Cardiac septum (tissue), 1 donor: ENCODE measurements at regions of chr1 and their contacts with region 1.

Region 1: DNA sequence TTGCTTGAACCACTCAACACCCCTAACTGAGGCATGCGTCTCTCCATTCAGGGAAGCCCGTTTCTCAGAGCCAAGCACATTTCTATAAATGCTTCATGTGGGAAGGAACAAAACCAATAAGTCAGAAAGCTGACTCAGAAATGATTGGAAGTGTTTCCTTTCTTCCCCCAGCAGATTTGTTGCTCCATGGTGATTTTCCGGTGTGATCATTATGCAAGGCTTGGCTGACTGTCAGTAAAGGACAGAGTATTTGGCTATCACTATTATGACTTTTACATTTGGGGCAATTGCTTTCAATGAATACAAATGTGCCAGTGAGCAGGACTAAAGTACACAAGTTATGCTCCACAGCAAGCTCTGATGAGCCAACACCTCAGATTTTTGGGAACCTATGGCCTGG is 53.3 kb upstream of the ZC3H11B start:
- DNase-seq: no peak

Region 2: DNA sequence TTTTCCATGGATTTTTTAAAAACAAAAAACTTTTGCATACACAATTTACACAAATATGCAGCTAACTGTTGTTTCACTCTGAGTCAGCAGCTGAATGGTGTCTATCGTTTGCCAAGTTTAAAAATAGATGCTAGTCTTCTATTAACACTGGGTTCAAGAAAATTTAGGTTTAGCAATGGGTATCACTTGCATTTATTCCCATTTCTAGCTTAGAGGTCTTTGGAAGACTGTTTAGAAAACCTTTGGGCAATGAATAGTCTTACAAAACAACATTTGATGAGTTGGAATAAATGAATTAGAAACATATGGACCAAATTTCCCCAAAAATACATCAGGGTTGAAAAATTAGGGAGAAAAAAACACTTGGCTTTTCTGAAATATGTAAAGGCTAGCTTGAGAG is 326.8 kb before region 1 on chr1:
- intact Hi-C with region 1: no loop called
- DNase-seq: no peak

Region 3: DNA sequence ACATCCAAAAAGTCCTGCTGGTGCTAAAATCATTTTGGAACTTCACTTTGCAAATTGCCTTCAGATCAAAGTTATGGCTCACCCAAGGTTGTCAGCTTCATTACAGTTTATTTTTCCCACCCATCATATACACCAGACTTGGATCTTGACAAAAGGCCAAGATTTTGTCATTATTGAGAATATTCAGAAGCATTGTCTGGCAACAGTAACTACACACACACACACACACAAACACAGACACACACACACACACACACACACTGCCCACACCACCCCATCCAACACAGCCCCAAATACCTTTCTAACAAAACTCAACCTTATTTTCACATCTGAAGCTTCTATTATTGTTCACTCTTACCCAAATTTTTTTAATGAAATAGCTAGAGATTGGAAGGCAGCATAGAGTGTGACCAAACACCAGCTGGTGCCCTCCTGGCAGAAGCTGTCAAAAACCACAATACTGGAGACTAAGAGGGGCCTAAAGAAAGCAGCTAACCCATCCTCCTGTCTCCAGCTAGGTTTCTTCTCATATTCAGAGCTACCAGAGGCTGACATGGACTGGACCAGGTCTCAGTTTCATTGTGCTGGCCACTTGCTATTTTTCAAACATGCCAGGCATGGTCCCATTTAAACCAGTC is 85.7 kb after region 1 on chr1:
- intact Hi-C with region 1: loop called (anchors 5 kb)
- DNase-seq: no peak

Region 4: GRCh38 chr1:219792337-219793021 is 126.2 kb after region 1 on chr1:
- intact Hi-C with region 1: loop called (anchors 5 kb)
- DNase-seq: no peak

Region 5: GRCh38 chr1:219812491-219813203 is 146.4 kb after region 1 on chr1:
- intact Hi-C with region 1: loop called (anchors 5 kb)
- DNase-seq: no peak